ENCODE measurements at regions of chr22 and their contacts with region 1.

Region 1: DNA sequence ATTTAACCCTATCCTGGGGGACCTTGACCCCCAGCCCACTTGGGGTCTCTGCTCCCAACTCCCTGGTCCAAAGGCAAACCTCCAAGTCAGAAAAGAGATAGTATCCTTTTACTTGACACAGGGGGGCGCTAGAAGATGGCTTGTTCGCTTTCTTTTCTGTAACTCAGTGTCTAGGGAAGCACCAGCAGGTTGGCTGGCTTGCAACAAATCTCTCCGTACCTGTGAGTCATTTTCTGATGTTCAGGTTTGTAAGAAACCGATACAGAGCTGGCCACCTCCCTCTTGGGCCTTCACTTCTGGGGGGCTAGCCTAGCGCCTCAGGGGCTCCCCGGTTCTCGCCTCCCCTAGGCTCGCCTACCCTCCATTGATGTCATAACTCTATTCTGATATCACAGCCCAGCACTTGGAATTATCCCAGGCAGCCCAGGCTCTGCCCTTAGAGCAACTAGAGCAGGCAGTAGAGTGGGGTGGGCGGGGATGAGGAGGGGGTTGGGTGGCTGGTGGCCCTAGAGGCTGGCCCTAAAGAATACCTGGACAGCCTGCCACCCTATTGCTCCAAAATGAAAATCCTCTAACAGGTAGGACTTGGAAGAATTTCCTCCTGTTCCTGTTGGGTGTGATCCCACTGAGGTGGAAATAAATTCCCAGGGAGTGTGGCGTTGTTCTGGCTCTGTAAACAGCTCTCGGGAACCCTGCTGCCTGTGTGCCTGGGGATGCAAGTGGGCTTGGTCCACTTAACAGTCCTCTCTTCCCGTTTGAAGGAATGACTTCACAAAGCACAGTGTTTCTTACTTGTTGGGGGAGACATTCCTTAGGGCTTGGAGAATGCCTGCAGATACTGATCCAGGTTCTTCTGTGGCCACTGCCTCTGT is 69.4 kb downstream of the OSBP2 start:
- DNase-seq: peak; percentile 13 to 30
- ATAC-seq: peak in 1 of 2 donors; percentile 71
- H3K4me3 ChIP-seq: no peak overlapping the region
- H3K27ac ChIP-seq: no peak overlapping the region
- H3K4me1 ChIP-seq: no peaks in the 10 kb centered on the region
- H3K27me3 ChIP-seq: no peaks in the 10 kb centered on the region
- CTCF ChIP-seq: peak; percentile 26 to 59 (median 51)
- POLR2A ChIP-seq: no peak

Region 2: DNA sequence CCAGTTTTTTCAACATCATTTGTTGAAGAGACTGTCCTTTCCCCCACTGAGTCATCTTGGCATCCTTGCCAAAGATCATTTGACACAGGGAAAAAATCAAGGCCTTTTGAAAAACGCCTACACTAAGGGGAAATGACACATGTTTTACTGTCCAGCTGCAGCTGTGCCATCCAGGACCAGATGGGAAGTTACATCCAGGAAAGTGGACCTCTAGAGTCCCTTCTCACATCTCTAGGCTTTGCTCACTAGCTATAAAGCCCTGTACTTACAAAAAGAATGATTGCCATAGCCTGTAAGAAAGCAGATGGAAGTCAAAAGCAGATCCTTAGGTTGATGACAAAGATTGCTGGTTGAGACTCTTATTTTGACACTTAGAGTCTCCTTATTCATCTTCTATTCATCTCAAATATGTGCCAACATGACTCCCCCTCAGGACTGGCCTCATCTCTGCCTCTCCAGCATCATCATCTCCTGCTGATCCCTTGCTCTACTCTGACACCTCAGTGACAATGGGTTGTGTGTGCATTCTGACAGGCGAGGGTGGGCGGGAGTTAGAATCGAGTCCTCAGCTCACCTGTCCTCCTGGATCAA is 46.6 kb before region 1 on chr22:
- in situ Hi-C with region 1: no loop called
- intact Hi-C with region 1: no loop called
- DNase-seq: no peak
- ATAC-seq: no peak
- H3K4me3 ChIP-seq: no peak overlapping the region
- H3K27ac ChIP-seq: no peak overlapping the region
- H3K4me1 ChIP-seq: peaks cover 0 to 8% of the 10 kb centered on the region in 2 donors
- H3K27me3 ChIP-seq: no peaks in the 10 kb centered on the region
- CTCF ChIP-seq: no peak
- POLR2A ChIP-seq: no peak

Region 3: GRCh38 chr22:30910358-30910757 is 146.3 kb after region 1 on chr22:
- in situ Hi-C with region 1: loop called in 3 of 4 experiments (anchors 10 kb)
- intact Hi-C with region 1: no loop called
- DNase-seq: no peak
- ATAC-seq: no peak
- H3K4me3 ChIP-seq: no peak overlapping the region
- H3K27ac ChIP-seq: no peak overlapping the region
- H3K4me1 ChIP-seq: no peaks in the 10 kb centered on the region
- H3K27me3 ChIP-seq: no peaks in the 10 kb centered on the region
- CTCF ChIP-seq: no peak
- POLR2A ChIP-seq: no peak

Region 4: GRCh38 chr22:30920407-30920806 is 156.4 kb after region 1 on chr22:
- in situ Hi-C with region 1: loop called in 3 of 4 experiments (anchors 10 kb)
- intact Hi-C with region 1: loop called (anchors 1 kb)
- DNase-seq: peak; percentile 32 to 49
- ATAC-seq: peak in 1 of 2 donors; percentile 54
- H3K4me3 ChIP-seq: peak overlapping the region in 1 of 4 donors; percentile 5
- H3K27ac ChIP-seq: no peak overlapping the region
- H3K4me1 ChIP-seq: peaks cover 0 to 13% of the 10 kb centered on the region in 2 donors
- H3K27me3 ChIP-seq: no peaks in the 10 kb centered on the region
- CTCF ChIP-seq: peak; percentile 65 to 92 (median 78)
- POLR2A ChIP-seq: no peak